Activated naive CD4-positive, alpha-beta T cell treated with anti-CD3 and anti-CD28 coated beads for 36 hours (primary cell): ENCODE measurements at regions of chr4 and their contacts with region 1.

Region 1: DNA sequence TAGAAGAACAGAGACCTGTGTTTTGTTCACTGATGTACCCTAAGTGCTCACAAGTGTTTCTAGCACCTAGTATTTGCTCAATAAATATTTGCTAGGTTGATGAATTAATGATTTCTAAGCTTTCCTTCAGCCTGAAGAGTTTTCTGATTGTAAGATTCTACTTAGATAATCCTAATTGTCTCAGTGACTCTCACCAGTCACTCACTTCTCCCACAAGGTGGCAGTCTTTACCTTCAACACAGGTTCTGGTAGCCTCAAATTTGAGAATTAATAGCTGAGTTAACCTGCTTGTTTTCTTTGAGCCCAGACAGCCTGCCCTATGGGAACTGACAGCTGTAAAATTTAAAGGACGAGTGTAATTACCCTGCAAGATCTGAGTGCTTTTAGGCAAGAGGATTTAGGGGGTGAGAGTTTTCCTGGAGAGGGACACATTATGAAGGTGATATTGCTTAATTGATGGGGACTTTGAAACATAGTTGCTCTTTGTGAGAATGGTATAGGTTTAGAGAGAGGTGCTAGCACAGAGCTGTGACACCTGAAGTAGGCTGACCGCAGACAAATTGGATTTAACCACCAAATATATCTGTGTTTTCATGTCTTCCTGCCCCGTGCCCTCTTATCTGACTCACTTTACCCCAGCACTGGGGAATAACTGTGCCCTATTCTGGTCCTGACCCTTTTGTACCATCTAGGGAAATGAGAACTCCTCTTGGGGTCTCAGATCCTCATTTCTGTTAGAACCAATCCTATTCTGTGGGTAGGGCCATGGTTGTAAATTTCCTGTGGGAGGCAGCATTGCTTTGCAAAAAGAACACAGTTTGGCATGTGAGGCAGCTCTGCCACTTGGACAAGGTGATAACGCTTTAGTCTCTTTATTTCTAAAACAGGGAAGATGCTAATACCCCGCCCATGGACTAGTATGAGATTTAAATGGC is 27.7 kb downstream of the CD38 start:
- DNase-seq: peak; percentile 62
- H3K4me3 Mint-ChIP-seq: no peak overlapping the region
- H3K27ac Mint-ChIP-seq: no peak overlapping the region
- H3K4me1 Mint-ChIP-seq: peaks cover 41% of the 10 kb centered on the region
- H3K27me3 Mint-ChIP-seq: no peaks in the 10 kb centered on the region

Region 2: DNA sequence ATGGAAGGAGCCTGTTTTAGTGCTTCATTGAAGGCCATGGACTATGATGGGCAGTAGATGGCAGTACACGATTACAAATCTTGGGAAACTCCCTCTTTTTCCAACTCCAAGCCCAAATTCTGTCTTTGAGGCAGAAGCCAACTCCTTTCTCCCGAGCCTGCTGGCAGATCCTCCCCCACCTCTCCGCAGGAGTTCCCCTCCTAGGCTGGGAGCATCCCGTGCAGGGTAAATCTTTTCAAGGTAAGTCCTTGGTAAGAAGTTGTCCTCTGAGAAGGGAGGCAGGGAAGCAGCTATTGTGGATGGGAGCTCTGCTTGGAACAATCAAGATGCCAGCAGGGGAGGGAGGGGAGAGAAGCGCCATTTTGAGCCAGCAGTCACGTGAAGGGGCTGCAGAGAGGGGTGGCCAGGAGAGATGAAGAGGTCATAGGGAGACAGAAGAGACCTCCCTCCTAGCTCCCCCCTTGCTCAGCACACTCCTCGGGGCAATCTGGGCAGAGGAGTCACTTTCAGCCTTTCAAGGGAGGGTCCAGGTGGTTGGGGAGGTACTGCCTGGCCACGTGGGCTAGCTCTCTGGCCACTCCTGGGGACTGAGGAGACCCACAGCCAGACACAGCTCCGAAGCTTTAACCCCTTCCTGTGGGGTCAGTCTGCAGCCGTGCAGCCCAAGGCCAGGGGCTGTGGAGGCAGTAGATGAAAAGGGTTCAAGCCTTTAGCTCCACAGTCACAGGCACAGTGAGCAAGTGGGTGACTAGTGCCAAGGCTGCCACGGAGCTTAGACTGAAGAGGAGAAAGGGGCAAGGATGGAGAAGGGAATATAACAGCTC is 326.5 kb before region 1 on chr4:
- CTCF ChIA-PET with region 1: no interaction called
- intact Hi-C with region 1: loop called (anchors 5 kb)
- DNase-seq: no peak
- H3K4me3 Mint-ChIP-seq: no peak overlapping the region
- H3K27ac Mint-ChIP-seq: no peak overlapping the region
- H3K4me1 Mint-ChIP-seq: no peaks in the 10 kb centered on the region
- H3K27me3 Mint-ChIP-seq: no peaks in the 10 kb centered on the region

Region 3: GRCh38 chr4:15738877-15739276 is 67.0 kb before region 1 on chr4:
- CTCF ChIA-PET with region 1: interaction called, 14 read pairs
- intact Hi-C with region 1: no loop called
- DNase-seq: peak; percentile 25
- H3K4me3 Mint-ChIP-seq: no peak overlapping the region
- H3K27ac Mint-ChIP-seq: no peak overlapping the region
- H3K4me1 Mint-ChIP-seq: peaks cover 44% of the 10 kb centered on the region
- H3K27me3 Mint-ChIP-seq: no peaks in the 10 kb centered on the region

Region 4: GRCh38 chr4:15794905-15795304 is 10.9 kb before region 1 on chr4:
- CTCF ChIA-PET with region 1: interaction called, 10 read pairs
- intact Hi-C with region 1: no loop called
- DNase-seq: no peak
- H3K4me3 Mint-ChIP-seq: peak overlapping the region; percentile 39
- H3K27ac Mint-ChIP-seq: peak overlapping the region; percentile 47
- H3K4me1 Mint-ChIP-seq: peaks cover 53% of the 10 kb centered on the region
- H3K27me3 Mint-ChIP-seq: no peaks in the 10 kb centered on the region

Region 5: DNA sequence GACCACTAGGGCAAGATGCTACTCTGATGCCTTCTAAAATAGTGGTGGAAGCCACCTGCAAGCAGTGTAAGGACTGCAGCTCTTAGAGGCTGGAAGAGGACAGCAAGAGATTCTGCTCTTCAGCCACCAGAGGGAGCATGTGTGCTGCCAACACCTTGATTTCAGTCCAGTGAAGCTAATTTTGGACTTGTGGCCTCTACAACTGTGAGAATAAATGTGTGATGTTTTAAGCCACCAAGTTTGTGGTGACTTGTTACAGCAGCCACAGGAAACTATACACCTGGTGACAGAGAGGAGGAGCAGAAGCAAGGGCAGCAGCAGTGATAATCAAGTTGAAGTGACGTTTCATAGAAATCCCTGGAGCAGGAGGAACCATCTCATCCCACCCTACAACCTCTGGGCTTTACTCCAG is 76.8 kb after region 1 on chr4:
- CTCF ChIA-PET with region 1: interaction called, 52 read pairs
- intact Hi-C with region 1: loop called (anchors 1 kb)
- DNase-seq: peak; percentile 57
- H3K4me3 Mint-ChIP-seq: no peak overlapping the region
- H3K27ac Mint-ChIP-seq: no peak overlapping the region
- H3K4me1 Mint-ChIP-seq: no peaks in the 10 kb centered on the region
- H3K27me3 Mint-ChIP-seq: no peaks in the 10 kb centered on the region

Region 6: DNA sequence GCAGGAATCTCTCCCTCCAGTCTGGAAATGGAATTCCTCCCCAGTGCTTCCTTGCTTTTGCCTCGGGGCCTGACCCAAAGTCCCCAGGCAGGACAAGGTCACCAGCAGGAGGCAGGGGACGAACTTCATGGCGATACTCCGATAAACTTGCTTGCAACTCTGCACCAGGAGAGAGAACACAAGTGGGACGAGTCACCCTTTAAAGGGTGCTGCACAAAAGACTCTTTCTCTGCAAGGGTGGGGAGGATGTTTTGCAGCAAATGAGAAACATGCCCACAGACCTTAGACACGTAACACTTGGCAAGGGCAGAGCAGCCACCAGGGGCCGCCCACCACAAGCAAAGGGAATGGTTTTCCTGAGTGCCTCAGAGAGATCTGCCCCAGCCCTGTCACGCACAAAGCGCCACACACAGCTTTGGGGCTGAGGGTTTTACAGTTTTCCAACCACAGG is 157.2 kb after region 1 on chr4 and contains the start of gene FGFBP2:
- CTCF ChIA-PET with region 1: interaction called, 19 read pairs
- intact Hi-C with region 1: no loop called
- DNase-seq: peak; percentile 76
- H3K4me3 Mint-ChIP-seq: no peak within 1 kb of the TSS
- H3K27ac Mint-ChIP-seq: no peak within 1 kb of the TSS
- H3K4me1 Mint-ChIP-seq: peaks cover 11% of the 10 kb centered on the region
- H3K27me3 Mint-ChIP-seq: peaks cover 2% of the 10 kb centered on the region
- total RNA-seq, gene FGFBP2: not detected

Region 7: GRCh38 chr4:16264798-16265197 is 458.9 kb after region 1 on chr4:
- CTCF ChIA-PET with region 1: no interaction called
- intact Hi-C with region 1: loop called (anchors 2 kb)
- DNase-seq: no peak
- H3K4me3 Mint-ChIP-seq: no peak overlapping the region
- H3K27ac Mint-ChIP-seq: no peak overlapping the region
- H3K4me1 Mint-ChIP-seq: peaks cover 5% of the 10 kb centered on the region
- H3K27me3 Mint-ChIP-seq: no peaks in the 10 kb centered on the region

Region 8: DNA sequence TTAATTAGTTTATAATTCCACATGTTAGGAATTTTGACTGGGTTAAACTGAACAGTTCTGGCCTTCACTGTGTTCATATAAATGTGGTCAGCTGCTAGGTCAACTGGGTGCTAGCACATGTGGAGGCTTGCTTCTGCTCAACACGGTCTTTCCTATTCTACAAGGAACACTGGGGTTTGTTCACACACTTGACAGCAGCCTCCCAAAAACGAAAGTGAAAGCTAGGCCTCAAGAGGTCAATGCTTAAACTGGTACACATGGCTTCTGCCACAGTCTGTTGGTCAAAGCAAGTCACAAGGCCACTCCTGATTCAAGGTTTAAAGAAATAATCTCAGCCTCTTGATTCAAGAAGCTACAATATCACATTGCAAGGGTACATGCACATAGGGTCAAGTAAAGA is 1579.6 kb after region 1 on chr4:
- CTCF ChIA-PET with region 1: no interaction called
- intact Hi-C with region 1: no loop called
- DNase-seq: peak; percentile 13
- H3K4me3 Mint-ChIP-seq: no peak overlapping the region
- H3K27ac Mint-ChIP-seq: no peak overlapping the region
- H3K4me1 Mint-ChIP-seq: peaks cover 15% of the 10 kb centered on the region
- H3K27me3 Mint-ChIP-seq: no peaks in the 10 kb centered on the region